Activated T-helper 2 cell treated with anti-CD3 and anti-CD28 coated beads, Interferon-gamma antibody, Interleukin-2, Interleukin-4, amounts not matched to agents 10 μg/mL and 5 μg/mL and 100 μg/mL, durations not matched to agents 14 hours and 24 hours and 36 hours (primary cell): ENCODE measurements at regions of chr3 and their contacts with region 1.

Region 1: DNA sequence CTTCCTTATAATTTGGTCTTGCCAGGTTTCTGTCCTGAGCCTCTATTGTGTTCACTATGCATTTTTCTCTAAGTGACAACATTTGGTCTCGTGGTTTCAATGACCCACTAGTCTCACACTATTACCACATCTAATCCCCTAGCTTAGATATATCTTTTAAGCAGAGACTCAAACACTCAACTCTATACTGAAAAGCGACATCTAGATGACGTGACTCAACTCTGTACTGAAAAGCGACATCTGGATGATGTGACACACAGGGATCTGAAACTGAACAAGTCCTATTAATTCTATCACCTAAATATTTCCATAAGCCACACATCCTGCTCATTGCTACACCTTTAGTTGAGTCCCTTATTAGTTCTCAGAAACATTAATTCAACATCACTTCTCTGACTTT is 141.7 kb upstream of the MBNL1 start:
- DNase-seq: no peak
- H3K4me3 Mint-ChIP-seq: no peak overlapping the region
- H3K27ac Mint-ChIP-seq: no peak overlapping the region
- H3K4me1 Mint-ChIP-seq: peaks cover 19% of the 10 kb centered on the region
- H3K27me3 Mint-ChIP-seq: peaks cover 30% of the 10 kb centered on the region

Region 2: GRCh38 chr3:152193673-152194267 is 66.7 kb after region 1 on chr3:
- intact Hi-C with region 1: loop called (anchors 2 kb)
- DNase-seq: peak; percentile 29
- H3K4me3 Mint-ChIP-seq: peak overlapping the region; percentile 69
- H3K27ac Mint-ChIP-seq: peak overlapping the region; percentile 89
- H3K4me1 Mint-ChIP-seq: peaks cover 75% of the 10 kb centered on the region
- H3K27me3 Mint-ChIP-seq: no peaks in the 10 kb centered on the region

Region 3: DNA sequence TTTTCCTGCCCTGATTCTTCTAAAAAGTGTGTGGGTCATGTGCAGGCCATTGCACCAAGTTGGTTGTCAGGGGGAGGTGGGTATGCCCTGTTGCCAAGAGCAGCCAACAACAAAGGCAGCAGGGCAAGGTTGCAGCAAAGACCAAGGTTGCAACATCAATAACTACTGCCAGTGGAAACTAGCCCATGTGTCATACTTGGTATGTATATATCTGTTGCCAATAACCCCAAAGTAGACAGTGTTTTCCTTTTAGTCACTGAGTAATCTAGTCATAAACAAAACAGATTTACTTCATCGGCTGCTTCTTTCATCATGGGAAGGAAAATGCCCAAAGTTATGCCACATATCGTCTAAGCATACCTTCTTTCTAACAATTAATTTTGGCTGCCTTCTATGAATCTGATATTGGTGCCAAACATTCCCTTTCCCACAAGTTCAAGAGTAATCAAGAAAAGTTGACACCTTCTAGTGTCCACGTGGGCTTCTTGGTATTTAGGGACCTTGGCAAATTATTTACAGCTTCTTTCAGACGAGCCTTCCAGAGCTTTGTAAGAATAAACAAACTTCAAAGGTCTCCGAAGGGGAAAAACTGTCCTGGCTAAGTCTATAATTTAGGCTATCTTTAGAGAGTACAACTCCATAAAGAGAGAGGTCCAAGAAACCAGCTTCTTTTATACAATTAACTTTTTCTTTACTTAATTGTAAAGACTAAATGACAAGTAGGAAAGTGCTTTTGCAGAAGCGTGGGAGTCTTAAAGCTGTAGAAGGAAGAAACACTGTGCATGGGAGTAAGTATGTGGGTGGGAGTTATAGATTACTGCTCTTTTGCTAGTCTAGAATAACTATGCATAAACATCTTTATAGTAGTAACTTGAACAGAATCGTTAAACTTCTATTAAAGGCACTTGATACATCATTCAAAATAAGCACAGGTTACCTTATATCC is 131.7 kb after region 1 on chr3:
- intact Hi-C with region 1: loop called (anchors 5 kb)
- DNase-seq: peak; percentile 49
- H3K4me3 Mint-ChIP-seq: peak overlapping the region; percentile 74
- H3K27ac Mint-ChIP-seq: peak overlapping the region; percentile 97
- H3K4me1 Mint-ChIP-seq: peaks cover 78% of the 10 kb centered on the region
- H3K27me3 Mint-ChIP-seq: no peaks in the 10 kb centered on the region

Region 4: GRCh38 chr3:152458376-152459117 is 331.5 kb after region 1 on chr3:
- intact Hi-C with region 1: loop called (anchors 5 kb)
- DNase-seq: no peak
- H3K4me3 Mint-ChIP-seq: peak overlapping the region; percentile 26
- H3K27ac Mint-ChIP-seq: peak overlapping the region; percentile 39
- H3K4me1 Mint-ChIP-seq: peaks cover 31% of the 10 kb centered on the region
- H3K27me3 Mint-ChIP-seq: no peaks in the 10 kb centered on the region